ENCODE measurements at regions of chr11 and their contacts with region 1.

Region 1: DNA sequence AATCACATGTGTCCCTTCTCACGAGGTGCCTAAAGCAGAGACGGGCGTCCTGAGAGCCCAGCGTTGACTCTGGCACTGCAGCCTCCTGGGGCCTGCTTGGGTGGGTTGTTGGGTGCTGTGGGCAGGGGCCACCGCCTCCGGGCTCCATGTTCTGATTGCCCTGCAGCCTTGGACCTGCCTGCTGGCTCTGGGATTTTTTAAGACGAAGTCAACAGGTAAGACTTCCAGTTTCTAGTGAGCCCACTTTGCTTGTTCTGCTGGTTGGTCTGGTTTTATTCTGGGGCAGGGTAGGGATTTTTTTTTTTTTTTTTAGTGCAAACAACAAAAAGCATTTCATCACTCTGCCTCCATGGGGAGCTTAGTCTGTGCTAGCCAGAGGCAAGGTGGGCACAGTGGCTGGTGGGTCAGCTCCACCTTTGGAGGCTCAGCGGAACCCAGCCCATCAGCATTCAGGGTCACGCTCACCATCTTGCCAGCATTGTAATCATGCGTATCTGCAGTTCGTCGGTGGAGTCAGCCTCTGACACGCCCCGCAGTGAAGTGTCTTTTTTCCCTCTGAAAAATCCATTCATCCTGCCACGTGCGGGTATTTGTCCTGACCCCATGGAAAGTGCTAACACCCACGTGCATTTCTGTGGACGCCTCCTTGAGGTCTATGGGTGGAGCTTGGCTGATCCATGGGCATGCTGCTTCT is 28.3 kb downstream of the NADSYN1 start:
- DNase-seq: peak; percentile 67 to 88
- H3K4me3 ChIP-seq: peak overlapping the region; percentile 31; the same call in 1 of the 2 replicates
- H3K27ac ChIP-seq: peak overlapping the region; percentile 85
- H3K4me1 ChIP-seq: peaks cover 22% of the 10 kb centered on the region
- H3K27me3 ChIP-seq: no peaks in the 10 kb centered on the region
- CTCF ChIP-seq: no peak

Region 2: DNA sequence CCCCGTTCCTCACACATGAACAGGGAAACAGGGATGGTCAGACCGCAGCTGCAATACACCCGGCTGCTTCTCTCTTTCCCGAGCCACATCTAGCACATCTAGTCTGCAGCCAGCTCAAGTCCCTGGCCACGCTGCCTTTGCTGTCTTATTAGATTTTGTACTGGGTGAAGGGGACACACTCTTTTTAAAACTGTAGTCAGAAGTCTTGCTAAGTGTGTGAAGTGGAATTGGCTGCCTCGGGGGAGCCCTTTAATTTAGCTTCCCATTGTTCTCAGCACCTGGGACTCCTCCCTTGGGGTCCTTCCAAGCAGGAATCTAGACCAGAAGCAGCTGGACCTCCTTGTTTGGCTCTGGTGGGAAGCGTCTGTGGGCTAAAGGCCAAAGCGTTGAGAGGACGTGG is 663.0 kb before region 1 on chr11:
- CTCF ChIA-PET with region 1: no interaction called
- POLR2A ChIA-PET with region 1: no interaction called
- intact Hi-C with region 1: no loop called
- DNase-seq: no peak
- H3K4me3 ChIP-seq: no peak overlapping the region
- H3K27ac ChIP-seq: no peak overlapping the region
- H3K4me1 ChIP-seq: no peaks in the 10 kb centered on the region
- H3K27me3 ChIP-seq: no peaks in the 10 kb centered on the region
- CTCF ChIP-seq: no peak

Region 3: DNA sequence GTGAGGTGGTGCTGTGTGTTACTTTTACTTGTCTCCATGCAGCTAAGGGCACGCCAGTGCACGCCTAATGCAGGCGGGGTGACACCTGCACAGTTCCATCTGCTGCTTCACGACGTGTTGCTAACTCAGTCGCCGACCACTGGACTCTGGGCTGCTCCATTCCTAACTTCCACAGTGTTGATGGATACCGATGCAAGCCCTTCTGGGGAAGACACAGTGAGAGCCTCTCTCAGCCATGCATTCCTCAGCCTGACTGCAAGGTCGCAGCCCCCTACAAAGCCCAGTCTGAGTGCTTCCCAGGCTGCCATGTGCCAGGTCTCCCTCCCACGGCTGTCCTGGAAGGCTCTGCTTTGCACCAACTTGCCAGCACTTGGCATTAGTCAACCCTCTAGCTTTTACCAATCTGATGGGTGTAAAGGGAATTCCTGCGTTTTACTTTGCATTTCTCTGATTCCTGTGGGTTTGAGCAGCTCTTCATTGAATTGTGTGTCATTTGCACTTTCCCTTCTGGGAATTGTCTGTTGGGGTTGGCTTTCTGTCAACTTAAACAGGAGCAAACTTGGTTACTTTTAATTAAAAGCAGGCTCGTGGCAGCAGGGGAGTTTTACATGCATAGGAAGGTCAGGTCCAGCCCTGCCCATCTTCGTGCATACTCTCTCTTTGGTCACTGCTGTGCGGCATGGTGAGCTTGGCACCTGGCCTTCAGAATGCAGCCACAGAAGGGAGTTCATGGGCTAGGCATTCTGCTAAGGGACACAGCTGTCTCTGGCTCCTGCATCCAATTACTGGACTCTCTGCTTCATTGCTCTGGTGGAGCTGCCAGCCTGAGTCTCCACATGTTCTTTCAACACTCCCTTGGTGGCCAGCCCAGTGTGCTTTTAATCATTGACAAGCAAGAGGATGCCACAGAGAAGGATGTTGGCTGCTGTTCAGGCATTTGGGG is 194.4 kb before region 1 on chr11:
- CTCF ChIA-PET with region 1: no interaction called
- POLR2A ChIA-PET with region 1: no interaction called
- intact Hi-C with region 1: no loop called
- DNase-seq: peak in 1 of 2 experiments; percentile 62
- H3K4me3 ChIP-seq: no peak overlapping the region
- H3K27ac ChIP-seq: no peak overlapping the region
- H3K4me1 ChIP-seq: peaks cover 31% of the 10 kb centered on the region
- H3K27me3 ChIP-seq: no peaks in the 10 kb centered on the region
- CTCF ChIP-seq: no peak

Region 4: DNA sequence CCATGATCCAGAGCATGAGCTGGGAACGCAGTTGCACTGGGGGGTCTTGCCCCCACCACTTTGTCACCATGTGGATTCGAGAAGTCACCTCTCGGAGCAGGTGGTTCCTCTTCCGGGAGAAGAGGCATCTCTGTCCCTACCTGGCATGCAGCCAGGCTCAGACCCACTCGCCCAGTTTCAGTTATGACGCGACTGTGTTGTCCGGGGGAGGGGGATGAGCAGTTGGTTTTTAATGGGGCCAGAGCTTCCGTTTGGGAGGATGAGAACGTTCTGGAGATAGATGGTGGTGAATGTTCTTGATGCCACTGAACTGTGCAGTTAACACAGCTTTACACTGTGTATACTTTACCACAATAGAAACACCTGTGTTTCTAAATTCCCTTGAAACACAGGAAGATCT is 74.7 kb before region 1 on chr11:
- CTCF ChIA-PET with region 1: no interaction called
- POLR2A ChIA-PET with region 1: no interaction called
- intact Hi-C with region 1: no loop called
- DNase-seq: no peak
- H3K4me3 ChIP-seq: no peak overlapping the region
- H3K27ac ChIP-seq: no peak overlapping the region
- H3K4me1 ChIP-seq: no peaks in the 10 kb centered on the region
- H3K27me3 ChIP-seq: peaks cover 62% of the 10 kb centered on the region
- CTCF ChIP-seq: no peak

Region 5: GRCh38 chr11:71465054-71465453 is 16.3 kb before region 1 on chr11:
- CTCF ChIA-PET with region 1: no interaction called
- POLR2A ChIA-PET with region 1: no interaction called
- intact Hi-C with region 1: no loop called
- DNase-seq: no peak
- H3K4me3 ChIP-seq: no peak overlapping the region
- H3K27ac ChIP-seq: no peak overlapping the region
- H3K4me1 ChIP-seq: no peaks in the 10 kb centered on the region
- H3K27me3 ChIP-seq: no peaks in the 10 kb centered on the region
- CTCF ChIP-seq: no peak

Region 6: DNA sequence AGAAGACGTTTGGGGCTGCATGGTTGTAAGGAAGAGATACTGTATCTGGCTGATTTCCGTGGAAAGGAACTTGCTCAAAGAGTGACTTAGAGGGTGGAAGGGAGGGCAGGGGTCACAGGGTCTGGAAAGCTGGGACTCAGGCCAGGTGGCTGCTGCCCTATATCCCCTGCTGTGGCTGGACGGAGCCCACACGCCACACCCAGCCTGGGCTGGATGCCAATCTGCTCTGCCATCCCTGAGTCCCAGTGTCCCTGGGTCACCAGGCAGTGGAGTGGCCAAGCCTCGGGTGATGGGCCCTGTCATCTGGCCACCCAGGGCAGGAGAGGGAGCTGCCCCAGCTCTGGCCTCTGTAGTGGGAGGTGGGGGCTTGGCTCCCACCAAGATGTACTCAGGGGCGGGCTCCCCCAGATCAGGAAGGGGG is 19.3 kb after region 1 on chr11:
- CTCF ChIA-PET with region 1: no interaction called
- POLR2A ChIA-PET with region 1: no interaction called
- intact Hi-C with region 1: loop called (anchors 2 kb)
- DNase-seq: peak; percentile 67 to 87
- H3K4me3 ChIP-seq: no peak overlapping the region
- H3K27ac ChIP-seq: no peak overlapping the region
- H3K4me1 ChIP-seq: peaks cover 38% of the 10 kb centered on the region
- H3K27me3 ChIP-seq: no peaks in the 10 kb centered on the region
- CTCF ChIP-seq: no peak

Region 7: GRCh38 chr11:71563401-71563800 is 82.1 kb after region 1 on chr11:
- CTCF ChIA-PET with region 1: interaction called, 3 read pairs
- POLR2A ChIA-PET with region 1: no interaction called
- intact Hi-C with region 1: loop called (anchors 2 kb)
- DNase-seq: peak in 1 of 2 experiments; percentile 31
- H3K4me3 ChIP-seq: no peak overlapping the region
- H3K27ac ChIP-seq: no peak overlapping the region
- H3K4me1 ChIP-seq: peaks cover 7% of the 10 kb centered on the region; the same call in 1 of the 2 replicates
- H3K27me3 ChIP-seq: peaks cover 25% of the 10 kb centered on the region
- CTCF ChIP-seq: peak; percentile 69; the same call in 1 of the 2 replicates